ENCODE measurements at regions of chr6 and their contacts with region 1.

Region 1: DNA sequence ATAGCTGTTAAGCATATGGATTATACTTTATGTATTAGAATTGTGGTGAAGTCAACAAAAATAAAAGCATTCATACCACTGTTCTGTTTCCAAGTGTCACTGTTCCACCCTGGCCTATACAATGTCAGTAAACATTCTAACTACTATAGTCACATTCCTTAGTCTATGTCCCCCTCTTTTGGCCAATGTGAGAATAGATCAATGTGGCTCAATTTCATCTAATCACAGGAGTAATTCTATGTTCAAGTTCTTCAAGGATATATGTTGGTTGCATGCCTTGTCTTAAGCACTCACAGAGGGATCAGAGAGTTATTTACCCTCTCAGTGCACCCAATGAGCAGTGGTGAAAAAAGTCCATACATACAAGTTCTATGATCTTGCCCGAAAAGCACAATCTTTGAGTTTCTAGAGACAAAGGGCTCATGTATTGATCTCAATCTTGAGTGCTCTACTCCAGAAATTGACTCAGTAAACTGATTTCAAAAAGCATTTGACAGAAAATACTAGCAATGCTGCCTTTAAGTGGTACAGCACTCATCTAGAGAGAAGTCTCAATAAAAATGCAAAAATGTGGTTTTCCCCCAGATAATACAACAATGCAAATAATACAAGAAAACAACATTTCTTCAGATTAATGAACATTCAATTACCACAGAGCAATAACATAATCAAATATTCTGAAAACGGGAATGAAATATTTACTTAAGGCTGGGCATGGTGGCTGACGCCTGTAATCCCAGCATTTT is 16.5 kb downstream of the SMLR1 start:
- DNase-seq: peak in 1 of 2 experiments; percentile 54
- H3K4me3 ChIP-seq: no peak overlapping the region
- H3K4me3 Mint-ChIP-seq: no peak overlapping the region
- H3K27ac Mint-ChIP-seq: no peak overlapping the region
- H3K4me1 ChIP-seq: no peaks in the 10 kb centered on the region
- H3K4me1 Mint-ChIP-seq: no peaks in the 10 kb centered on the region
- H3K27me3 ChIP-seq: no peaks in the 10 kb centered on the region
- H3K27me3 Mint-ChIP-seq: no peaks in the 10 kb centered on the region
- CTCF ChIP-seq: peak; percentile 52 to 58

Region 2: DNA sequence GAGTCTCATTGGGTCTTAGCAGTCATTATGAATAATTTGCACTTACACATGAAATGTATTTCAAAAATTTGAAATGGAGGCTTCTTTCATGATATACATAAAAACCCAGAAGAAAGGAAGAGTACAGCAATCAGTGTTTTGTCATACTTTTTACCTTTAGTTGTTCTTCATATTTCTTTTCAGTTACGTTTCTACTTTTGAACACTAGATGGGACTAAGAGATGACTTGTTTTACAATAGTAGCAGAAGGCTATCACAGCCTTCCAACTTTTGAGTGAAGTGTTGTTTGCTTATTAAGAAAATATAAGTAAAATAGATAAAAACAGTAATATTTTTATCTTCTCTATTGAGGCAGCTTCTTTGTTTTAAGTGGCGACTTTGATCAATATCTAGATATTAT is 767.2 kb before region 1 on chr6:
- CTCF ChIA-PET with region 1: no interaction called
- POLR2A ChIA-PET with region 1: no interaction called
- intact Hi-C with region 1: loop called (anchors 10 kb)
- DNase-seq: no peak
- H3K4me3 ChIP-seq: no peak overlapping the region
- H3K4me3 Mint-ChIP-seq: no peak overlapping the region
- H3K27ac Mint-ChIP-seq: no peak overlapping the region
- H3K4me1 ChIP-seq: no peaks in the 10 kb centered on the region
- H3K4me1 Mint-ChIP-seq: no peaks in the 10 kb centered on the region
- H3K27me3 ChIP-seq: no peaks in the 10 kb centered on the region
- H3K27me3 Mint-ChIP-seq: no peaks in the 10 kb centered on the region
- CTCF ChIP-seq: peak in 1 of 2 experiments; percentile 26

Region 3: DNA sequence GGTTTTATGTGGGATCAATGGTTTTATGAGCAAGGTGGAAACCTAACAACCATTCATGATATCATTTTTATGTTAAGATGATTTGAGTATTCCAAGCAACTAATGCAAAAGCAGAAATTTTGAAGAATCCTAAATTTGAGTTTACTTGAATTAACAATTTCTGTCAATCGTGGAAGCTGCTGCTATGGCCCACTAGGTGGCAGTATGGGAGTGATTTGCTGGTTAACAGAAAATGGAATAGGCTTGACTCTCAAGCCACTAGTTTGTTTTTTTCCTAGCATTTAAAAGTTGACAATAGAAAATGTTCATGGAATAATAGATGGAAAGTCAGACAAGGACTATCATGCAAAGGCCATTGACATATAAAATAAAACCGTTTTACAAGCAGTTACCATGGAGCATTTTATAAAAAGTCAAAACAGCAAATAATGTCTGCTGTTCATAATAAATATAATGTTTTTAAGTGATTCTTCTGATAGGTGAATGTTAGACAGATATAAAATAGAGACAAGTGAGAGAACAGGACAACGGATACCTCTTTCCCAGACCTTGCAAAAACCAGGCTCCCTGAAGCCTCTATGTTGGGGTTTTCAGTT is 521.0 kb before region 1 on chr6:
- CTCF ChIA-PET with region 1: no interaction called
- POLR2A ChIA-PET with region 1: no interaction called
- intact Hi-C with region 1: loop called (anchors 1 kb)
- DNase-seq: peak in 1 of 2 experiments; percentile 51
- H3K4me3 ChIP-seq: no peak overlapping the region
- H3K4me3 Mint-ChIP-seq: no peak overlapping the region
- H3K27ac Mint-ChIP-seq: no peak overlapping the region
- H3K4me1 ChIP-seq: peaks cover 8% of the 10 kb centered on the region
- H3K4me1 Mint-ChIP-seq: peaks cover 30% of the 10 kb centered on the region
- H3K27me3 ChIP-seq: no peaks in the 10 kb centered on the region
- H3K27me3 Mint-ChIP-seq: no peaks in the 10 kb centered on the region
- CTCF ChIP-seq: peak; percentile 74 to 85

Region 4: DNA sequence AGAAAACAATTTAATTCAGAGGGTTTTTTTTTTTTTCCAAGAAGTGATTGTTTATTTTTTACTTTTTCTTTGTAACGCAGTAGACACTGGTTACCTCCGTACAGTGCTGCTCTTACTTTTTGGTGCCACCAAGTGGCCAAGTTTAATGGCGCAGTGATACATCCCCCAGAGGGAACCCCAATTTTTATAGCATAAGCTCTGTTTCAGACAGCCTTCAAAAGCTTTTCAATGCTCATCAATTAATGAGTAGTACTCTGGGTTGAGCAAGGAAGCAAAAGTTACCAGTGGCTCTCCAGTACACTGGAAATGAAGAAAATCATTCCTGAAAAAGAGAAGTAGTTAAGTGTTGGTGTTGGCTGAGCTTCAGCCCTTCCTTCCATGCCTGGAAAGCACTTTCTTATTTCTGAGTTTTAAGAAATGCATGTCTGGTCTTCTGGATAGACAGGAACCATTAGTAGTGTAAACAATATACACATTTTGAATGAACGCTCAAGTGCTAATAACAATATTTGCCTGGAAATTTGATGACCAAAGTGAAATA is 145.7 kb before region 1 on chr6:
- CTCF ChIA-PET with region 1: interaction called, 3 read pairs
- POLR2A ChIA-PET with region 1: no interaction called
- intact Hi-C with region 1: loop called (anchors 2 kb)
- DNase-seq: peak; percentile 41 to 59
- H3K4me3 ChIP-seq: no peak overlapping the region
- H3K4me3 Mint-ChIP-seq: no peak overlapping the region
- H3K27ac Mint-ChIP-seq: no peak overlapping the region
- H3K4me1 ChIP-seq: no peaks in the 10 kb centered on the region
- H3K4me1 Mint-ChIP-seq: no peaks in the 10 kb centered on the region
- H3K27me3 ChIP-seq: no peaks in the 10 kb centered on the region; the same call in 1 of the 2 replicates
- H3K27me3 Mint-ChIP-seq: peaks cover 8% of the 10 kb centered on the region
- CTCF ChIP-seq: peak; percentile 77 to 83

Region 5: GRCh38 chr6:130788954-130789353 is 54.8 kb before region 1 on chr6:
- CTCF ChIA-PET with region 1: no interaction called
- POLR2A ChIA-PET with region 1: no interaction called
- intact Hi-C with region 1: loop called (anchors 2 kb)
- DNase-seq: no peak
- H3K4me3 ChIP-seq: no peak overlapping the region
- H3K4me3 Mint-ChIP-seq: no peak overlapping the region
- H3K27ac Mint-ChIP-seq: no peak overlapping the region
- H3K4me1 ChIP-seq: no peaks in the 10 kb centered on the region
- H3K4me1 Mint-ChIP-seq: no peaks in the 10 kb centered on the region
- H3K27me3 ChIP-seq: no peaks in the 10 kb centered on the region
- H3K27me3 Mint-ChIP-seq: no peaks in the 10 kb centered on the region
- CTCF ChIP-seq: no peak

Region 6: DNA sequence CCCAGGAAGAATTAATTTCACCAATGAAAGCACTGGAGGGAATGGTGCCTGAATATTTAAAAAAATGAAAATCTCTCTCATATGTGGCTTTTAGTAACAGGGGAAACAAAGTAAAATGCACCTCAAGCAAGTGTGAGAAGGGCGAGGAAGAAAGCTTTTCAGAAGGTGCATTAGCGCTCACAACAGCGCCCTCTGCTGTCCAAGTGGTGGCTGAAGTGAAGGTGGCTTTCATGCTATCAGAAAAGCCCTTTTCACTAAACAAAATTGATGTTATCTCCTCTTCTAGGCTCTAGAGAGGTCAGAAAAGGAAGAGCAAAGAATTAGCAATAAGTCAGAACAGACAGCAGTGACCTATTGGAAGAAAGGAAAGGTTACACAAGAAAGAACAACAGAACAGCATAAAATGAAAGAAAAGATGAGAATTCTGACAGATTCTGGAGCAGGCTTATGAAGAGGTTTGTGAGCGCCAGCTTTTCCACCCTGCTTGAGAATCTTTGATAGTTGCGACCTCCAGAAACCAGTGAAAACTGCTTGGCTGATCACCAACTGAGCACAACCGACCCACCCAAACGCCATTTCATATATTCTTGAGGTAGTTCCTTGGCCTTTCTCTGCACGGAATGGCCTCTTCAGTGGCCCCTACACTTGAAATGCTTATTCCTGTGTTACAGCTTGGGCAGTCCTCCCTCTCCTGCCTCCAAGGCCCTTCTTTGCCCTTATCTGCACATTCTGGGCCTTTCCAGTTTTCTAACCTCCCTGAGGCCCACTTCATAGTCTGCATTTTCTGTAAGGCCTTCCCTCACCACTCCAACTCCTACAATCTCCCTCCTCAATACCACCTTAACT is 28.7 kb after region 1 on chr6:
- CTCF ChIA-PET with region 1: interaction called, 3 read pairs
- POLR2A ChIA-PET with region 1: no interaction called
- intact Hi-C with region 1: loop called (anchors 1 kb)
- DNase-seq: peak; percentile 63 to 72
- H3K4me3 ChIP-seq: no peak overlapping the region
- H3K4me3 Mint-ChIP-seq: no peak overlapping the region
- H3K27ac Mint-ChIP-seq: peak overlapping the region; percentile 11
- H3K4me1 ChIP-seq: no peaks in the 10 kb centered on the region
- H3K4me1 Mint-ChIP-seq: peaks cover 10% of the 10 kb centered on the region
- H3K27me3 ChIP-seq: no peaks in the 10 kb centered on the region
- H3K27me3 Mint-ChIP-seq: no peaks in the 10 kb centered on the region
- CTCF ChIP-seq: peak; percentile 80 to 90

Region 7: GRCh38 chr6:130945401-130945919 is 101.7 kb after region 1 on chr6:
- CTCF ChIA-PET with region 1: no interaction called
- POLR2A ChIA-PET with region 1: no interaction called
- intact Hi-C with region 1: no loop called
- DNase-seq: no peak
- H3K4me3 ChIP-seq: no peak overlapping the region
- H3K4me3 Mint-ChIP-seq: no peak overlapping the region
- H3K27ac Mint-ChIP-seq: no peak overlapping the region
- H3K4me1 ChIP-seq: peaks cover 13% of the 10 kb centered on the region; the same call in 1 of the 2 replicates
- H3K4me1 Mint-ChIP-seq: peaks cover 36% of the 10 kb centered on the region
- H3K27me3 ChIP-seq: no peaks in the 10 kb centered on the region
- H3K27me3 Mint-ChIP-seq: no peaks in the 10 kb centered on the region
- CTCF ChIP-seq: no peak

Measured in Caco-2 (cell line).